Esophagus muscularis mucosa (tissue), 4 donors: ENCODE measurements at regions of chr9 and their contacts with region 1.

Region 1: DNA sequence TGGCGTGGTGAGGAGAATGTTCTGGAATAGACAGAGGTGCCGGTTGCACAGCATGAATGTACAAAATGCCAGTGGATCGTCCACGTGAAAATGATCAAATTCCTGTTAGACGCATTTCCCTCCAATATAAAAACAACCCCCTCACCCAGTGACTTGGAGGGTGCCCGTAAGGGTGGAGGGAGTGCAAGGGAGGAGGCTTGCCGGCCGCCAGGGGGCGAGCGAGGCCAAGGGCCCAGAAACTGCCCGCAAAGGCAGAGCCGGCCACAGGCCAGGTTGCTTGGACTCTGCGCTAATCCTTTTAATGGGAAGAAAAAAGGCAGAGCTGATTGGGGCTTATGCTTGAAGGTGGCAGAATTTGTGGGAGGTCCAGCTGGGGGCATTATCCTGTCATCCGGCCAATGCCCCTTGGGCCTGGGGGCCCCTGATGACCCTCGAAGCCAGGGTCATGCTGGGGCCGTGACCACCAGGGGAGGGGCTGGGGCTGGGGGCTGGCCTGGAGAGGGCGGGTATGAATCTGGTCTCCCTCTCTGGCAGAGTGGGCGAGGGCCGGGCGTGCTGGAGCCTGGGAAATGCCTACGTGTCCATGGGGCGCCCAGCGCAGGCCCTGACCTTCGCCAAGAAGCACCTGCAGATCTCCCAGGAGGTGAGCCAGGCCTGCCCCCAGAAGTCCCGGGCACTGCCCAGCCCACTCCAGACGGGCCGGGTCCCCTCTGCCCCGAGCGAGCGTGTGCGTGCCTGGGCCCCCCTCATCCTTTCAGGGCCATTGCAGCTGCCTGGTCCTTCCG is 12.0 kb downstream of the GPSM1 start:
- DNase-seq: no peak
- H3K4me3 ChIP-seq: no peak overlapping the region
- H3K27ac ChIP-seq: no peak overlapping the region
- H3K4me1 ChIP-seq: peaks cover 19 to 32% (median 30%) of the 10 kb centered on the region in 4 donors
- H3K27me3 ChIP-seq: no peaks in the 10 kb centered on the region
- CTCF ChIP-seq: peak; percentile 77 to 91 (median 82)
- EP300 ChIP-seq: no peak
- POLR2A ChIP-seq: no peak

Region 2: DNA sequence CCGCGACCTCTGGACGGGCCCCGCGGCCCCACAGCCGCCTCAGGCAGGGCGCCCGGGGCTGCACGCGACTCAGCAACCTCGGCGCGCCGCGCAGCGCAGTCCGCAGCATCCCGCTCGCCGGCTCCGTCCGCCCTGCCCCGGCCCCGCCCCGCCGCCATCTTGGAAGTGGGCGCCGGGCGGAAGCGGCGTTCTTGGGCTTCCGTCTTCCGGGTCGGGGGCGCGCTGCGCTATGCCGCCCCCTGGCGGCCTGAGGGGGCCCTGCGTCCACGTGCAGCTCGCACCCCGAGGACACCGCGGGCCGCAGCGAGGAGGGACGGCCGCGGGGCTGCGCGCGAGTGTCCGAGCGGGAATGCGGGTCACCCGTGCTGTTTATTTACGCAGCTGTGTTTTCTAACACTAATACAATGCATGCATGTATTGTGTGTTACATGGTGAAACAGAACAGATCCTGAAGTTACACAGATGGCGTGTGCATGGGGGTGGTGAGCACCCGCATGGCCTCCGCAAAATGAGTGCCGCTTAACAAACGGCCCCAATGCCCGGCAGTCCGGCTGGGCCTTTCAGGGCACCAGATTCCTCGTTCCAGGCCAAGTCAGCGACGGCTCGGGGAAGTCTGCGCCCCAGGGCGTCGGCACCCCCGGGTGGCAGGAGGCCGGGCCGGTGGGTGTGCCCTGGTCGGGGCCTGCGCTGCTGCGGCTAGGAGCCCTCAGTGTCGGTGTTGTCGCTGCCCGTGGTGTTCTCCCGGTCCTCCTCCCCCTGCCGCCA is 24.4 kb after region 1 on chr9 and contains the start of gene DNLZ:
- intact Hi-C with region 1: loop called (anchors 2 kb)
- DNase-seq: peak; percentile 95
- H3K4me3 ChIP-seq: peak within 1 kb of the TSS; percentile 87 to 100 (median 93)
- H3K27ac ChIP-seq: peak within 1 kb of the TSS; percentile 84 to 96 (median 94)
- H3K4me1 ChIP-seq: peaks cover 29 to 39% (median 37%) of the 10 kb centered on the region in 4 donors
- H3K27me3 ChIP-seq: peaks cover 0 to 28% (median 0%) of the 10 kb centered on the region in 4 donors
- CTCF ChIP-seq: peak in 2 of 3 experiments; percentile 99
- EP300 ChIP-seq: no peak
- POLR2A ChIP-seq: no peak
- total RNA-seq, gene DNLZ: 29.5 to 41.3 (median 35.8) TPM

Region 3: GRCh38 chr9:136399176-136400037 is 60.0 kb after region 1 on chr9:
- intact Hi-C with region 1: loop called (anchors 5 kb)
- DNase-seq: no peak
- H3K4me3 ChIP-seq: peak overlapping the region; percentile 80 to 100 (median 88)
- H3K27ac ChIP-seq: peak overlapping the region; percentile 50 to 74 (median 62)
- H3K4me1 ChIP-seq: peaks cover 18 to 25% (median 24%) of the 10 kb centered on the region in 4 donors
- H3K27me3 ChIP-seq: no peaks in the 10 kb centered on the region
- CTCF ChIP-seq: no peak
- EP300 ChIP-seq: no peak
- POLR2A ChIP-seq: no peak